Sigmoid colon (tissue), 7 donors: ENCODE measurements at regions of chr17 and their contacts with region 1.

Region 1: DNA sequence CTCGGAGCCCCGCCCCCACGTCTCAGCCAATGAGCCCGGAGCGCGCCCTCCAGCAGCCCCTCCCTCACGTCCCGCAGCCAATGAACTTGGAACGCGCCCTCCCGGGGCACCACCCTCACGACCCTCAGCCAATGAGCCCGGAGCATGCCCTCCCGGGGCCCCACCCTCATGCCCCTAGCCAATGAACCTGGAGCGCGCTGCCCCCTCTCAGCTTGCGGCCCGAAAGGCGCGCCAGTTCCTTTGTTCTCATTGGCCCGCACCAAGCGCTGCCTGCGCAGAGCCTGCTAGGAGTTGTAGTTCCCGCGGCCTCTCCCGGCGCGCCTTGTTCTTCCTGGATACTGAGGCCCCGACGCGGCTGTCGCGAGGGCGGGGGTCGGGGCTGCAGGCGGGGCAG is at the start of gene LRRC45:
- DNase-seq: peak; percentile 100
- H3K4me3 ChIP-seq: peak within 1 kb of the TSS; percentile 66 to 98 (median 86)
- H3K27ac ChIP-seq: peak within 1 kb of the TSS; percentile 75 to 84 (median 80)
- H3K4me1 ChIP-seq: peaks cover 0 to 40% (median 32%) of the 10 kb centered on the region in 4 donors
- H3K27me3 ChIP-seq: no peaks in the 10 kb centered on the region
- CTCF ChIP-seq: no peak
- EP300 ChIP-seq: no peak
- POLR2A ChIP-seq: no peak
- total RNA-seq, gene LRRC45: 5.3 to 8.8 (median 6.9) TPM

Region 2: DNA sequence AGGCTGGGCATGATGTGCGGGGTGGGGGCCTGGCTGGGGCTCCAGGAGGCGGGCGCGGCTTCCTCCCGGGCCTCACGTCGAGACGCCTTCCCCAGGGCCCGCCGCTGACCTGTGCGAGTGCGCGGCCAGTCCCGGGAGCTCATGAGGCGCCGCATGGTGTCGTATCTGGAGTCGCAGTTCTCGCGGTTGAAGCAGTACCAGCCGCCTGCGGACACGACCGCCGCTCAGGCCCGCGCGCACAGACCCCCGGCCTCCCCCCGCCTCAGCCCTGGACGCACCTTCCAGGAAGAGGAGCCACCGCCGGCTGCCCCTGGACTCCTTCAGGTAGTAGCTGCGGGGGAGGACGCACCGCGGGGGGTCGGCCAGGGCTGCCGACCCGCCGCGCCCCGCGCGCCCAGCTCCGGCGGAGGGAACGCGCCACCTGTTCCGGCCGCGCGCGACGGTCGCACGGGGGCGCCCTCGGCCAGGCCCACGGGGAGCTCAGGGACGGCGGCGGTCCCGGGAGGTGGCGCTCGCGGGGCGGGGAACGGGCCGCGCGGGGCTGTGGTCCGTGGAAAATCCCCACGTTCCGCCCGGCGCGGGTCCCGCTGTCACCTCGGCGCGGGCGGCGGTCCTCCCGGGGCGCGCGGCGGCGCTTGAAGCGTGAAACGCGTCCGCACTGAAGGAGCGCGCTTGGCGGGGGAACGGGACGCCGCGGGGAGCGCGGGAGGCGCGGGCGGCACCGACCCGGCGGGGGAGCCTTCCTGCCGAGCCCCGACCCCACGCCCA is 63.4 kb before region 1 on chr17:
- intact Hi-C with region 1: loop called (anchors 1 kb)
- DNase-seq: peak; percentile 84
- H3K4me3 ChIP-seq: peak overlapping the region in 3 of 4 donors; percentile 22 to 50 (median 44)
- H3K27ac ChIP-seq: no peak overlapping the region
- H3K4me1 ChIP-seq: peaks cover 0 to 28% (median 23%) of the 10 kb centered on the region in 4 donors
- H3K27me3 ChIP-seq: peaks cover 38 to 83% (median 63%) of the 10 kb centered on the region in 3 donors
- CTCF ChIP-seq: peak in 1 of 4 experiments; percentile 78
- EP300 ChIP-seq: no peak
- POLR2A ChIP-seq: no peak

Region 3: DNA sequence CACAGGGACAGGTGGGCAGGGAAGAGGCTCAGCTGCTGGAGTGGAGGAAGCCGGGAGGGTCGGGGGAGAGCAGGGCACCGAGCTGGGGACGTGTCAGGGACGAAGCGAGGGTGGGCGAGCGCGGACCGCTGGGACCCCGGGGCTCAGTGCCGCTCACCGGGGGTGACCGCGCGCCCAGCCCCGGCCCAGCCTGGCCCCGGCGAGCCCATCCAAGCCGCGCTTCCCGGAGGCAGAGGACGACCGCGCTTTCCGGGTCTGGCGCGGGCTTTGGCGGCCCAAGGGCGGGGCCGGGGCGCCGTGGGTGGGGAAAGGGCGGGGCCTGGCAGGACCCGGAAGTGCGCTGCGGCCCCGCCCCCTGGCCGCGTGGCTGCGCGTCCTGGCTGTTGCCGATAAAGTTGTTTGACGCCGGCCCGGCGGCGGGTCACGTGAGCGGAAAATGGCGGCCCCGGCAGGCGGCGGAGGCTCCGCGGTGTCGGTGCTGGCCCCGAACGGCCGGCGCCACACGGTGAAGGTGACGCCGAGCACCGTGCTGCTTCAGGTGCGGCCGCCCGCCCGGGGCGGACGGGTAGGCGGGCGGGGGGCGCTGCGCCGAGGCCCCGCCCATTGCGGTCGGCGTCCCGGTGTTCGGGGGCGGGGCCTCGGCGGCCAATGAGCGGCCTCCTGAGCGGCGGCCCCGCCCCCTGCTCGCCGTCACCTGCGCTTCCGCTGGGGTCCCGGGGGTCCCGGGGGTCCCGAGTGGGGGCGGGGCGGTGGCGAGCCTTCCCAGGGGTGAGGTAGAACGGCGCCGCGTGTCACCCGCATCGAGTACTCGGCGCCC is 45.6 kb before region 1 on chr17 and contains the start of gene ASPSCR1:
- intact Hi-C with region 1: loop called (anchors 5 kb)
- DNase-seq: peak; percentile 96
- H3K4me3 ChIP-seq: peak within 1 kb of the TSS; percentile 68 to 97 (median 86)
- H3K27ac ChIP-seq: peak within 1 kb of the TSS; percentile 90 to 94 (median 91)
- H3K4me1 ChIP-seq: peaks cover 0 to 20% (median 18%) of the 10 kb centered on the region in 4 donors
- H3K27me3 ChIP-seq: no peaks in the 10 kb centered on the region
- CTCF ChIP-seq: no peak
- EP300 ChIP-seq: no peak
- POLR2A ChIP-seq: peak in 1 of 2 donors; percentile 23
- total RNA-seq, gene ASPSCR1: 9.3 to 27.7 (median 19.3) TPM

Region 4: GRCh38 chr17:82257473-82257872 is 234.5 kb after region 1 on chr17:
- intact Hi-C with region 1: no loop called
- DNase-seq: peak; percentile 76
- H3K4me3 ChIP-seq: no peak overlapping the region
- H3K27ac ChIP-seq: peak overlapping the region; percentile 9 to 62 (median 56)
- H3K4me1 ChIP-seq: peaks cover 0 to 12% (median 3%) of the 10 kb centered on the region in 4 donors
- H3K27me3 ChIP-seq: no peaks in the 10 kb centered on the region
- CTCF ChIP-seq: no peak
- EP300 ChIP-seq: no peak
- POLR2A ChIP-seq: no peak